HepG2 (cell line): ENCODE measurements at regions of chr2 and their contacts with region 1.

Region 1: GRCh38 chr2:216619411-216620393 is 13.5 kb upstream of the IGFBP2 start:
- DNase-seq: peak; percentile 62
- ATAC-seq: peak; percentile 50
- H3K4me3 ChIP-seq: no peak overlapping the region
- H3K27ac ChIP-seq: no peak overlapping the region
- H3K4me1 ChIP-seq: peaks cover 46% of the 10 kb centered on the region
- H3K27me3 ChIP-seq: peaks cover 2 to 29% of the 10 kb centered on the region in 2 experiments; a peak in 4 of 5 replicates
- CTCF ChIP-seq: no peak
- EP300 ChIP-seq: 0 out of 4 replicates have a peak, but pooled peaks of 1 of the 2 experiments have one; percentile 33
- POLR2A ChIP-seq: no peak
- RAD21 ChIP-seq: no peak

Region 2: DNA sequence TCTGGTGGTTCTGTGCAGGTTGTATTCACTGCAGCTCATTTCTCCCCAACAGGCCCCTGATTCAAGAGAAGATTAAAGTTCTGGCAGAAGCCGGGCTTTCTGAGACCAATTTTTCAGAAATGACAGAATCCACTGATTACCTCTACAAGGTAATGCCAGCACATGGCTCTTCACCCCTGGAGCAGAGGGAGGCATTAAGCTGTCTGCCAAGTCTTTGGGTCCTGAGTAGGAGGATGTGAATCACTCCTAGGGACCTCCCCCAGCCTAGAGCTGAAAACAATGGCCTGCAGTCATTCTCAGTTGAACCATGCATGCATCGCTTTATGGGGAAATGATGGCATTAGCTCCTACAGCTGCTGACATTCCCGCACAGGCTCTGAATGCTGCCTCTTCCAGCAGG is 141.6 kb before region 1 on chr2:
- CTCF ChIA-PET with region 1: no interaction called
- POLR2A ChIA-PET with region 1: no interaction called
- in situ Hi-C with region 1: no loop called
- intact Hi-C with region 1: no loop called
- DNase-seq: no peak
- ATAC-seq: no peak; the same call in 2 of the 3 replicates
- H3K4me3 ChIP-seq: no peak overlapping the region
- H3K27ac ChIP-seq: no peak overlapping the region
- H3K4me1 ChIP-seq: no peaks in the 10 kb centered on the region
- H3K27me3 ChIP-seq: no peaks in the 10 kb centered on the region
- CTCF ChIP-seq: no peak
- EP300 ChIP-seq: no peak
- POLR2A ChIP-seq: no peak
- RAD21 ChIP-seq: no peak

Region 3: DNA sequence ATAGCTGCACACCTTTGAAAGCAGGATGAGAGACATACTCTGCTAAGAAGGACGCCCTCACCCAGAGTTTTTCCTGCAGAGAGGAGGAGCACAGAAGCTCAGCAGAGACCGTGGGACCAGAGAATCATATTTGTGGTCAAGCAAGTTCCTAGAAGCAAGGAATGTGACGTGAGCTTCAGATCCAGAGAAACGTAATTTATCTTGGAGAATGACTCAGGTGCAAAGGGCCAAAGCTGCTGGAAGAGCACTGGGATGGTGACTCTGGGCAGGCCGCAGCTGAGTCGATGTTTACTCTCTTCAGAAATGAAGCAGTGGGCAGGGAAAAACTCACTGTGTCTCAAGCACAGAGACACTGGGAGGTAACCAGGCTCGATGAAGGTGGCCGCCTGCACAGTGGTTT is 36.6 kb before region 1 on chr2:
- CTCF ChIA-PET with region 1: no interaction called
- POLR2A ChIA-PET with region 1: no interaction called
- in situ Hi-C with region 1: no loop called
- intact Hi-C with region 1: loop called (anchors 5 kb)
- DNase-seq: no peak
- ATAC-seq: peak; percentile 54
- H3K4me3 ChIP-seq: no peak overlapping the region
- H3K27ac ChIP-seq: no peak overlapping the region
- H3K4me1 ChIP-seq: peaks cover 24% of the 10 kb centered on the region
- H3K27me3 ChIP-seq: peaks cover 4 to 47% of the 10 kb centered on the region in 2 experiments; a peak in 4 of 5 replicates
- CTCF ChIP-seq: no peak
- EP300 ChIP-seq: no peak
- POLR2A ChIP-seq: no peak
- RAD21 ChIP-seq: no peak

Region 4: GRCh38 chr2:216735086-216735485 is 115.4 kb after region 1 on chr2:
- CTCF ChIA-PET with region 1: no interaction called
- POLR2A ChIA-PET with region 1: no interaction called
- in situ Hi-C with region 1: no loop called
- intact Hi-C with region 1: no loop called
- DNase-seq: no peak
- ATAC-seq: no peak
- H3K4me3 ChIP-seq: no peak overlapping the region
- H3K27ac ChIP-seq: no peak overlapping the region
- H3K4me1 ChIP-seq: peaks cover 5% of the 10 kb centered on the region
- H3K27me3 ChIP-seq: peaks cover 0 to 25% of the 10 kb centered on the region in 2 experiments; a peak in 1 of 5 replicates
- CTCF ChIP-seq: no peak
- EP300 ChIP-seq: no peak
- POLR2A ChIP-seq: no peak
- RAD21 ChIP-seq: no peak

Region 5: DNA sequence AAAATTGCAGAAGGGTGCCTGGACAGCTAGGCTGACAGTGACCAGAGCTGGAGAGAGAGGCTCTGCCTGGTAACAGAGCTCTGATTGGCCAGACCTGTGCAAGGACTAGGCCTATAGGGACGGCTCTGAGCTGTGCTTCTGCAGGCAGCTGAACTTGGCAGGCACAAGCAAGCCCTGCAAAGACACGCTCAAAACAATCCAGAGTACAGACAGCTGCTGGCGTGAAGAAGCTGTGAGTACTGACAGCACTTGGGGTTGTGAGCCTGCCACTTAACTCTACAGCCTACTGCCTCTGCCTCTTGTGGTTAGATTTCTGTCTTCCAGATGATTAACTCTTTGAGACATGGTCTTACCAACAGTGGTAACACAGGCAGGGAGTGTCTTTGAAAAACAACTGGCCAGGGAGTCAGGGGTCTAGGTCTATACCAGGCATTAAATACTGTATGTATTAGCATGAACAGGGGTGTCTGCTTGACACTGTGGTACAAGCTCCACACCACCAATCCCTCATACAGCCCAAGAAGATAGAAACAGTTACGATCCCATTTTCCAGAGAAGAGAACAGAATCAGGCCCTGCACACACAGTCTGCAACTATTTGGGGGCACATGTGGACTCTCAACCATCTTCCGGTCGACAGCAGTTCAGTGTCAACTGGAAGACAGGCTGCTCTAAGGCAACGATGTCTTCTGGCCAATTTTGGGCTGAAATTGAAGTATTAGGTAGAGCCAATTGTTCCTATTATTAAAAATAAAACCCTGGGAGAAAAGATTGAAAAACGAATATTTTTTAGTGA is 814.7 kb after region 1 on chr2:
- CTCF ChIA-PET with region 1: no interaction called
- POLR2A ChIA-PET with region 1: no interaction called
- in situ Hi-C with region 1: no loop called
- intact Hi-C with region 1: no loop called
- DNase-seq: peak; percentile 69
- ATAC-seq: peak; percentile 100
- H3K4me3 ChIP-seq: no peak overlapping the region
- H3K27ac ChIP-seq: no peak overlapping the region
- H3K4me1 ChIP-seq: peaks cover 6% of the 10 kb centered on the region
- H3K27me3 ChIP-seq: 0 out of 5 replicates have a peak, but pooled peaks cover 0 to 2% of the 10 kb centered on the region in 2 experiments
- CTCF ChIP-seq: no peak
- EP300 ChIP-seq: peak in 1 of 2 experiments; percentile 71; a peak in 2 of 4 replicates
- POLR2A ChIP-seq: no peak
- RAD21 ChIP-seq: no peak